ENCODE measurements at regions of chr5 and their contacts with region 1.

Region 1: DNA sequence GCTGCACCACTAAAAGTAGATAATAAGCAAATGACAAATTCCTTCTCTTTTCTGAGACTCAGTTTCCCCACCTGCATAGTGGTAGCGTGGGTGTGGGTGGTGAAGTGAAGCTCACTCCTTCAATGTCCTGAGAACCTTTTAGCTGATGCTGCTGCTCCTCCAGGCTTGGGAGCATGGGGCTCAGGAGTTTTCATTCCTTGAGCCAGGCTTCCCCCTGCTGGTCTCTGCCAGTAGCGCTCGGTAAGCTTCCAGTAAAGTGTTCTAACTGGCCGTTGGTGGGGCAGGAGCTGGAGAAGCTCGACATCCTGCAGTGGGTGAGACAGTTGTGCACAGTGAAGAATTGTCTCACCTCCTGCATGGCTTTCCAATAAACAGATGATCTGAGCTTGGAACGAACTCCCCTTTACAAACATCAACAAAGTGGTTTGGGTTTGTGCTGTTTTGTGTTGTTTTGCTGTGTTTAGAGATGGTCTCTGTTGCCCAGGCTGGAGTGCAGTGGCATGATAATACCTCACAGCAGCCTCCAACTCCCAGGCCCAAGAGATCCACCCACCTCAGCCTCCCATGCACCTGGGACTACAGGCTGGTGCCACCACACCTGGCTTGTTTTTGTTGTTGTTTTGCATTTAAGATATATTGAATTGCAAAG is 34.6 kb downstream of the SPARC start:
- DNase-seq: peak; percentile 65
- ATAC-seq: peak; percentile 99
- H3K4me3 ChIP-seq: no peak overlapping the region
- H3K27ac ChIP-seq: no peak overlapping the region
- H3K4me1 ChIP-seq: peaks cover 5% of the 10 kb centered on the region
- H3K27me3 ChIP-seq: peaks cover 0 to 12% of the 10 kb centered on the region in 2 experiments; a peak in 3 of 5 replicates
- CTCF ChIP-seq: peak; percentile 94
- EP300 ChIP-seq: no peak
- POLR2A ChIP-seq: no peak
- RAD21 ChIP-seq: peak; percentile 91

Region 2: GRCh38 chr5:151016700-151017099 is 635.4 kb before region 1 on chr5:
- CTCF ChIA-PET with region 1: no interaction called
- POLR2A ChIA-PET with region 1: no interaction called
- in situ Hi-C with region 1: no loop called
- intact Hi-C with region 1: no loop called
- DNase-seq: peak; percentile 48
- ATAC-seq: no peak
- H3K4me3 ChIP-seq: no peak overlapping the region
- H3K27ac ChIP-seq: peak overlapping the region; percentile 48
- H3K4me1 ChIP-seq: peaks cover 90% of the 10 kb centered on the region
- H3K27me3 ChIP-seq: no peaks in the 10 kb centered on the region; a peak in 1 of 5 replicates
- CTCF ChIP-seq: no peak
- EP300 ChIP-seq: no peak
- POLR2A ChIP-seq: no peak
- RAD21 ChIP-seq: no peak

Region 3: DNA sequence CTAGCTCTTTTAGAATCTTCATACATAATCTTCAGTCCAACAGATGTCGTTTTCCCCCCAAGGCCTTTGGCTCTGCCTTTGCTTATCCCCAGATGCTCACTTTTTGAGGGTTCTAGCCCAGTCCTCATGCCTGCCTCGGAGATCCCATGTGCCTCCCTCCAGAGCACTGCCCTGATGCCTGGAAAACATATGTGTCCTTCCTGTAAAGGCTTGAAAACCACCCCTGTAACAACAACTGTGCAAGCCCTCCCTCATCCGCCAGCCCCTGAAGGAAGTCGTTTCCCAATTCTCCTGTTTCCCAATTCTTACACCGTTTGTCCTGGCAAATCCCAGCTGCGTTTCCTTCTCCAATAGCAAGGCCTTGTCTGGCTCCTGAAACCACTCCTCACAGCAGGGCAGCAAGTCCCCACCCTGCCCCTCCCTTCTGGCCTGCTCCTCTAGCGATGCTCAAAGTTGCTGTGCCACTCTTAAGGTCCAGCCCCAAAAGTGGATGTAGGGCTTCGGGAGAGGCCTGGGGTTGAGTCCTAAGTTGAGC is 152.6 kb before region 1 on chr5:
- CTCF ChIA-PET with region 1: interaction called, 7 read pairs
- POLR2A ChIA-PET with region 1: no interaction called
- in situ Hi-C with region 1: no loop called
- intact Hi-C with region 1: loop called (anchors 1 kb)
- DNase-seq: no peak
- ATAC-seq: no peak
- H3K4me3 ChIP-seq: no peak overlapping the region
- H3K27ac ChIP-seq: no peak overlapping the region
- H3K4me1 ChIP-seq: no peaks in the 10 kb centered on the region
- H3K27me3 ChIP-seq: no peaks in the 10 kb centered on the region
- CTCF ChIP-seq: no peak
- EP300 ChIP-seq: no peak
- POLR2A ChIP-seq: no peak
- RAD21 ChIP-seq: no peak

Region 4: DNA sequence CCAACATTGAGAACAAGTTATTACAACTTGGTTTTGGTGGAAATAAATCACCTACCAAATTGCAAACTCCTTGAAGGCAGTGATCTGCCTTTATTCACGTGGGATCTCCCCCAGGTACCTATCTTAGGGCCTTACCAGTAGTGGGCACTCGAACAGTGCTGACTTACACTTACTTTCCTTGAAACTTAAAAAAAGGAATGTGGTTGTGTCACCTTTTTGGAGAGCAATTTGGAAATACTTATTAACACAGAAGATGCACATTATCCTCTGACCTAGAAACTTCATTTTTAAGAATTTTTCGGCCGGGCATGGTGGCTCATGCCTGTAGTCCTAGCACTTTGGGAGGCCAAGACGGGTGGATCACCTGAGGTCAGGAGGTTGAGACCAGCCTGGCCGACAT is 87.6 kb before region 1 on chr5:
- CTCF ChIA-PET with region 1: no interaction called
- POLR2A ChIA-PET with region 1: no interaction called
- in situ Hi-C with region 1: no loop called
- intact Hi-C with region 1: loop called (anchors 1 kb)
- DNase-seq: no peak
- ATAC-seq: no peak
- H3K4me3 ChIP-seq: no peak overlapping the region
- H3K27ac ChIP-seq: no peak overlapping the region
- H3K4me1 ChIP-seq: no peaks in the 10 kb centered on the region
- H3K27me3 ChIP-seq: peaks cover 2 to 37% of the 10 kb centered on the region in 2 experiments; a peak in 4 of 5 replicates
- CTCF ChIP-seq: no peak
- EP300 ChIP-seq: no peak
- POLR2A ChIP-seq: no peak
- RAD21 ChIP-seq: no peak